GM12878 (cell line): ENCODE measurements at regions of chr6 and their contacts with region 1.

Region 1: GRCh38 chr6:70884074-70884983 is 72.5 kb downstream of the B3GAT2 start:
- DNase-seq: peak; percentile 19
- ATAC-seq: peak; percentile 94
- H3K4me3 ChIP-seq: no peak overlapping the region
- H3K27ac ChIP-seq: no peak overlapping the region
- H3K4me1 ChIP-seq: no peaks in the 10 kb centered on the region
- H3K27me3 ChIP-seq: no peaks in the 10 kb centered on the region
- CTCF ChIP-seq: peak; percentile 75 to 89 (median 87); a peak in 4 of 6 replicates
- EP300 ChIP-seq: no peak
- POLR2A ChIP-seq: no peak
- RAD21 ChIP-seq: peak; percentile 97

Region 2: GRCh38 chr6:70520575-70520974 is 363.8 kb before region 1 on chr6:
- CTCF ChIA-PET with region 1: interaction called, 36 read pairs
- POLR2A ChIA-PET with region 1: no interaction called
- RAD21 ChIA-PET with region 1: interaction called, 22 read pairs
- SMC1A ChIA-PET with region 1: interaction called, 16 read pairs
- in situ Hi-C with region 1: loop called (anchors 25 kb)
- intact Hi-C with region 1: loop called (anchors 1 kb)
- DNase-seq: no peak
- ATAC-seq: peak; percentile 65
- H3K4me3 ChIP-seq: no peak overlapping the region
- H3K27ac ChIP-seq: no peak overlapping the region
- H3K4me1 ChIP-seq: no peaks in the 10 kb centered on the region
- H3K27me3 ChIP-seq: no peaks in the 10 kb centered on the region
- CTCF ChIP-seq: peak; percentile 30 to 61 (median 34); a peak in 4 of 6 replicates
- EP300 ChIP-seq: no peak
- POLR2A ChIP-seq: no peak
- RAD21 ChIP-seq: peak; percentile 85

Region 3: DNA sequence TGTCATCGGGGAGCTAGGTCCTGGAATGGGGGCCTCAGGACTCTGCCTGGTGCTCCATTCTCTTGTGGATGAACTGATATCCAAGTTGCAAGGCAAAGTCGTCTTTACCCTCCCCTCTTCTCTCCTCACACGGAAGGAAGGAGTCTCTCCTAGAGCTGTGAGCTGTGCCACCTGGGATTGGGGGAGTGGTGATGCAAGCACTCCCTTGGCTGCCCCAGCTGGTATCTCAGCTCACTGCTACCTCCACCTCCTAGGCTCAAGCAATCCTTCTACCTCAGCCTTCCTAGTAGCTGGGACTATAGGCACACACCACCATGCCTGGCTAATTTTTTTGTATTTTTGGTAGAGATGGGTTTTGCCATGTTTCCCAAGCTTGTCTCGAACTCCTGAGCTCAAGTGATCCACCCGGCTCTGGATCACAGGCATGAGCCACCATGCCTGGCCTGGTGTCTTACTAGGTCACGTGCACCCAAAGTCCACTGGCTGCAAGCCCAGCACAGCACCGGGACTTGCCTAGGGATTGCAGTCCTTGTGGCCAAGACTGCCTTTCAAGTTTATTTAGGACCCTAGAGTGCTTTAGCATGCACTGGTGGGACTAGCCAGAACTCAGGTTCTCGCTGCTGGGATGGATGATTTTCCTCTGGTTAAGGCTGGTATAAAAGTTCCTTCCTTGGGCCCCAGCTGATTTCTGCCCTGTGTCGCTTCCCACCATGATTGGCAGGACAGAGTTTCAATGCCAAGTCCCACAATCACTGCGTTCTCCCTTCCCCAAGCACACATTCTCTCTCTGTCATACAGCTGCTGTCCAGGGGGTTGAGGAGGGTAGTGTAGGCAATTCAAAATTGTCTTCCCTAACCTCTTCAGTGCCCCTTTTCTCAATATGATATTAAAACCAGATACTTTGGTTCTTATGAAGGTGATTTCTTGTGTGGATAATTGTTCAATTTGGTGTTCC is 183.1 kb before region 1 on chr6:
- CTCF ChIA-PET with region 1: interaction called, 70 read pairs
- POLR2A ChIA-PET with region 1: no interaction called
- RAD21 ChIA-PET with region 1: interaction called, 12 read pairs
- SMC1A ChIA-PET with region 1: interaction called, 42 read pairs
- in situ Hi-C with region 1: loop called (anchors 5 kb)
- intact Hi-C with region 1: loop called (anchors 1 kb)
- DNase-seq: no peak
- ATAC-seq: no peak
- H3K4me3 ChIP-seq: no peak overlapping the region
- H3K27ac ChIP-seq: no peak overlapping the region
- H3K4me1 ChIP-seq: no peaks in the 10 kb centered on the region
- H3K27me3 ChIP-seq: no peaks in the 10 kb centered on the region
- CTCF ChIP-seq: no peak
- EP300 ChIP-seq: no peak
- POLR2A ChIP-seq: no peak
- RAD21 ChIP-seq: no peak

Region 4: GRCh38 chr6:70857387-70858077 is 26.8 kb before region 1 on chr6:
- CTCF ChIA-PET with region 1: interaction called, 29 read pairs
- POLR2A ChIA-PET with region 1: no interaction called
- RAD21 ChIA-PET with region 1: interaction called, 10 read pairs
- SMC1A ChIA-PET with region 1: interaction called, 22 read pairs
- in situ Hi-C with region 1: no loop called
- intact Hi-C with region 1: no loop called
- DNase-seq: peak; percentile 66
- ATAC-seq: peak; percentile 100
- H3K4me3 ChIP-seq: no peak overlapping the region
- H3K27ac ChIP-seq: no peak overlapping the region
- H3K4me1 ChIP-seq: peaks cover 7% of the 10 kb centered on the region
- H3K27me3 ChIP-seq: no peaks in the 10 kb centered on the region
- CTCF ChIP-seq: no peak
- EP300 ChIP-seq: peak; percentile 70 to 87; a peak in 3 of 4 replicates
- POLR2A ChIP-seq: no peak
- RAD21 ChIP-seq: no peak

Region 5: DNA sequence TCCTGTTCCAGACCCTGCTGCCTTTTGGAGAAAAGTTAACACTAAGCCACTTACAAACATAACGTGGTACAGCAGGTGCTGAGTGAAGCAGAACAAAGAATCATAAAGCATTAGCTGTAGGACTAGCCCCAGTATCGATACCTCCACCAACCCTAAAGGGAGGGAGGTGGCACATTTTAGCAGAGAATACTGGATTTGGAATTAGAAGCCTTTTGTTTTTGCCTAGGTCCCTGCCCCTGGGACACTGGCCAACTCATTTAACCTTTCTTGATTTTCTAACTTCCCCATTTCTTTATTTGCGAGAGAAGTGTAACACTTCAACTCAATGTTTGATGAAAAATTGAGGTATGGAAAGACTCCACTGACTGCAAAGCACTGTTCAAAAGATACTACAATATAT is 21.0 kb before region 1 on chr6:
- CTCF ChIA-PET with region 1: interaction called, 29 read pairs
- POLR2A ChIA-PET with region 1: no interaction called
- RAD21 ChIA-PET with region 1: interaction called, 10 read pairs
- SMC1A ChIA-PET with region 1: interaction called, 22 read pairs
- in situ Hi-C with region 1: no loop called
- intact Hi-C with region 1: no loop called
- DNase-seq: no peak
- ATAC-seq: peak; percentile 61
- H3K4me3 ChIP-seq: no peak overlapping the region
- H3K27ac ChIP-seq: no peak overlapping the region
- H3K4me1 ChIP-seq: no peaks in the 10 kb centered on the region
- H3K27me3 ChIP-seq: no peaks in the 10 kb centered on the region
- CTCF ChIP-seq: no peak
- EP300 ChIP-seq: no peak
- POLR2A ChIP-seq: no peak
- RAD21 ChIP-seq: no peak

Region 6: GRCh38 chr6:71012866-71013469 is 128.6 kb after region 1 on chr6:
- CTCF ChIA-PET with region 1: interaction called, 4 read pairs
- POLR2A ChIA-PET with region 1: no interaction called
- RAD21 ChIA-PET with region 1: no interaction called
- SMC1A ChIA-PET with region 1: interaction called, 4 read pairs
- in situ Hi-C with region 1: no loop called
- intact Hi-C with region 1: loop called (anchors 1 kb)
- DNase-seq: peak; percentile 12
- ATAC-seq: peak; percentile 97
- H3K4me3 ChIP-seq: no peak overlapping the region
- H3K27ac ChIP-seq: no peak overlapping the region
- H3K4me1 ChIP-seq: no peaks in the 10 kb centered on the region
- H3K27me3 ChIP-seq: no peaks in the 10 kb centered on the region; a peak in 1 of 4 replicates
- CTCF ChIP-seq: peak; percentile 76 to 83 (median 80)
- EP300 ChIP-seq: no peak
- POLR2A ChIP-seq: no peak
- RAD21 ChIP-seq: peak; percentile 90